Activated B cell treated with CpG ODN at 0.5 μM for 24 hours (primary cell): ENCODE measurements at regions of chr18 and their contacts with region 1.

Region 1: DNA sequence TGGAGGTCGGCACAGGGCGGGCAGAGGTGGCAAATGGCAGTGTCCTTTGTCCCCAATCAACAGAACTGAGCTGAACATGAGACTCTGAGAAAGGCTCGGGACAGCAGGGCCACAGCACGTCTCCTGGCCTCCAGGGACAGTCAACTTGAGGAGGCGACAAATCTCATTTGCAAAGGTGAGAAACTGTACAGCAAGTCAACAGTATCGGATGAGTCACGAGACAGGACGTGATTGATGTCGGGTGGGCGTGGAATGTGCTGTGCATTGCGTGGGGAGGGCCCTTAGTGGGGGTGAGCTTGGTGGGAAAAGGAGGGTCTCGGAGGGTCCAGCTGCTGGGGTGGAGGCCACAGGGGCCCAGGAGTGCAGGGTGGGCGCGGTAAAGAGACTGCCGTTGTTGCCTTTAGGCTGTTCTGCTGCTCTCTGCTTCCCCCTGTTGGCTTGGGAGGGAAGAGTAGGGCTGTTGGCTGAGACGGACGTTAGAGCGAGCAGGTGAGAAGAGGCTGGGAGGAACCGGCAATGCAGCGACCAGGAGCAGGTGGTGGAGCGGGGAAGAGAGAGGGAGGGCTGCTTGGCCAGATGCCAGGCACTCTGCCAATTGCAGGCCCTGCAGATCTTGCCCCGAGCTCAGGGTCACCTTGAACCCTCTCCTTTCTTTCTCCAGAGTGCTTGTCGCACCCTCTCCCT is 164.3 kb downstream of the BCL2 start:
- DNase-seq: peak; percentile 73
- ATAC-seq: peak; percentile 63
- H3K4me3 Mint-ChIP-seq: peak overlapping the region; percentile 84
- H3K27ac Mint-ChIP-seq: peak overlapping the region; percentile 99
- H3K4me1 Mint-ChIP-seq: peaks cover 99% of the 10 kb centered on the region
- H3K27me3 Mint-ChIP-seq: no peaks in the 10 kb centered on the region
- CTCF ChIP-seq: peak; percentile 76

Region 2: DNA sequence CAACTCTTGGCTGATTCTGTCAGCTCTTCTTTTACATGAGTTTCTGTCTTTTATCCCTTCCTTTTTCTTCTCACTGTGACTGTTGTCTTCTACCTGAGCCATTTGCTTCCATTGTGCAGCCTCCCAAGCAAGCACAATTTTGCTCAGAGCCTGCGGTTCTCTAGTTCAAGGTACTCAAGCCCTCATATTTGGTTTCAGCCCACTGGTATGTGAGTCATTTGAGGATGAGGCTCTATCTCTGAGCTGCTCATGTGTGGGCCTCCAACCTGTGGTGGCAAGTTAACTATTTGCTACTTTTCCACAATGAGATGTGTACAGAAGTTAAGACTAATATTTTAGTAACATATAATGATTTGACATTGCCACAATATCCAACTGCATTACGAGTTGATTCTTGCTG is 257.0 kb before region 1 on chr18:
- CTCF ChIA-PET with region 1: no interaction called
- POLR2A ChIA-PET with region 1: no interaction called
- intact Hi-C with region 1: no loop called
- DNase-seq: no peak
- ATAC-seq: no peak
- H3K4me3 Mint-ChIP-seq: no peak overlapping the region
- H3K27ac Mint-ChIP-seq: peak overlapping the region; percentile 57
- H3K4me1 Mint-ChIP-seq: peaks cover 15% of the 10 kb centered on the region
- H3K27me3 Mint-ChIP-seq: no peaks in the 10 kb centered on the region
- CTCF ChIP-seq: no peak

Region 3: DNA sequence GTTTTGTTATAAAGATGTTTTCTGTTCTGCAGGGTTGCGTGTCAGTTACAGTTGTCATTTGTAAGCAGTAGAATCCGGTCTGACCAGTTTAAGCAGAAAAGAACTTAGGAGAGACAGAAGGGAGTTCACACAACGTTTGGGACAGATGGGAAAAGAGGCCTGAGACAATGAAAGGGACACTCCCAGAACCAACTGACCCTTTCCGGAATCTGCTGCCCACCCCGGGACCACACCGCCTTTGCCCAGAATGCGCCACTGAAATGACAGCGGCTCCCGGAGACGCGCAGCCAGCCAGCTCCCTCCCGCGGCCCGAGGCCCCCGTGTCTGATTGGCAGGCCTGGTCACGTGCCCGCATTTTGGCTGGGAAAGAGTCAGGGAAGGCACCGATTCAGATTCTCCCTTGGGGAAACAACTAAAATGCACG is 80.3 kb before region 1 on chr18:
- CTCF ChIA-PET with region 1: no interaction called
- POLR2A ChIA-PET with region 1: no interaction called
- intact Hi-C with region 1: loop called (anchors 2 kb)
- DNase-seq: peak; percentile 45
- ATAC-seq: peak; percentile 58
- H3K4me3 Mint-ChIP-seq: peak overlapping the region; percentile 78
- H3K27ac Mint-ChIP-seq: peak overlapping the region; percentile 0
- H3K4me1 Mint-ChIP-seq: peaks cover 25% of the 10 kb centered on the region
- H3K27me3 Mint-ChIP-seq: no peaks in the 10 kb centered on the region
- CTCF ChIP-seq: no peak

Region 4: DNA sequence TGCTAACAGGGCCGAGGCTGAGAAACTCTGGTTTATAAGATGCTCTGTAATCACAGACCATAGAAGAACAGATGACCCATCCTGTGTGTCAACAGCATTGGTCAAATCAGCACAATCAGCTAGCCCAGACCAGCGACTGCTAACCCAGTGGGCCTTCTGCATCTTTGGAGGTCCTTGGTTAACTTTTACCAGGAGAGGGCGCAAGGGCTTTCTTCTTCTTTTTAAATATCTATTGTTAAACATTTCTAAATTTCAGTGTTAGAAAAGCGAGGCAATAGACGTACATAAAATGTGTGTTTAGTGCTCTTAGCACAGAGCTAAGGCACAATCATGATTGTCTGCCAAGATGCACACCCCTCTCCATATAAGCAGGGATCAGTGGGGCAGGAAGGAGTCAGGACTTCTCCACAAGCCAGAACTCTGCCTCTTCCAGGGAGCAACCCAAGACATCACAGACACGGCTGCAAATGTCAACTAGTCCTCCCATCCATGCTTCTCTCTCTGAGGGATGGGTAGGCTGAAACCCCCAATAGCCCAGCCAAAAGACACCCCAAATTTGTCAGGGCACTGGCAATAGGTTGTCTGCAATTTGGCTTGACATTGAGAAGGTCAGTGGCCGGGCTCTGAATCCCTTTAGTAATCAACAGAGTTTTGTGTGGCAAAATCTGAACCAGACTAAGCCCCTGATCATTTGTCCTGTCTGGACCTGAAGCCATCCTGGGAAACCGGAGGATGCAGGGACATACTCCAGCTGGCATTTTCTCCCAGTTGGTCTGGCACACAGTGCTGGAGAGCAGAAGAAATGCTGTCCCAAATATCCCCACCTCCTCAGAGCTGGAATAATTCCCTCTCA is 24.0 kb before region 1 on chr18:
- CTCF ChIA-PET with region 1: interaction called, 28 read pairs
- POLR2A ChIA-PET with region 1: interaction called, 6 read pairs
- intact Hi-C with region 1: loop called (anchors 1 kb)
- DNase-seq: no peak
- ATAC-seq: peak; percentile 65
- H3K4me3 Mint-ChIP-seq: no peak overlapping the region
- H3K27ac Mint-ChIP-seq: peak overlapping the region; percentile 70
- H3K4me1 Mint-ChIP-seq: peaks cover 35% of the 10 kb centered on the region
- H3K27me3 Mint-ChIP-seq: no peaks in the 10 kb centered on the region
- CTCF ChIP-seq: no peak

Region 5: GRCh38 chr18:63180971-63181376 is 25.7 kb after region 1 on chr18:
- CTCF ChIA-PET with region 1: no interaction called
- POLR2A ChIA-PET with region 1: interaction called, 52 read pairs
- intact Hi-C with region 1: no loop called
- DNase-seq: no peak
- ATAC-seq: peak; percentile 5
- H3K4me3 Mint-ChIP-seq: peak overlapping the region; percentile 72
- H3K27ac Mint-ChIP-seq: peak overlapping the region; percentile 82
- H3K4me1 Mint-ChIP-seq: peaks cover 94% of the 10 kb centered on the region
- H3K27me3 Mint-ChIP-seq: no peaks in the 10 kb centered on the region
- CTCF ChIP-seq: no peak

Region 6: DNA sequence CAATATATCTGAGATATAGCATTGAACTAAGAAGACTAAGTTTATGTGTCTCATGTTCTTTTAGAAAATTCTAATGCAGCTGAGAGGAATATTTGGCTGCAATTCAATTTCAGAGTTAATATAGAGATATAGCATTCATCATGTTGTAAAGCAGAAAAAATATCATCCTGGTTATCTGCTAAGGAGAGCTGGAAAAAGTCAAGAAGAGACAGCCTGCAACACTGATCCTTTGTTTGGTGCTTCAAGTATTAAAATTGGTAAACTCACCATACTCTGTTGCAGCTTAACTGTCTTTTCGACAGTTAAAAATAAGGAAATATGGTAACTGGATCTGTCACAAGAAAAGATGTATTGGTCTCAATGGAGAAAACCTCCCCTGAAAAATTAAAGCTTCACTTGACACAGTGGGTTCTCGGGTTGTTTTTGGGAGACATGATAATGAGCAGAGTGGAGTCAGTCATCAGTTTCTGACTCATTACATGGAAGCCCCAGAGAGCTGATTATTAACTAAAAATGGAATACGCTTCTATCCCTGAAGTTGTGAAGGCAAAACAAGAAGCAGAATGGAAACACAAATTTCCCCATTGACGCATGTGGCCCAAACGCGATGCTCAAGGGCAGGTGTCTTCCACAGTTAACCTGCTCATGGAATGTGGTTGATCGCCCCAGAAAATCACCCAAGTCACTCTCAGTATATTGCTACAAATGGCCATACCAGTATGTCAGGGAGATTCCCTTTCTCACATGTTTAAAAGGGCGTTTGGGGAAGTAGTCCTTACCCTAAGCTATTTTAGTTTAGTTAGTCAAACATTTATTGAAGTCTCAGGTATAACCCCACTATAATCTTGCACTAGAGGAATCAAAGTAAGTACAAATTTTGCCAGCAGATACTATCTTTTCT is 156.1 kb after region 1 on chr18:
- CTCF ChIA-PET with region 1: interaction called, 9 read pairs
- POLR2A ChIA-PET with region 1: interaction called, 123 read pairs
- intact Hi-C with region 1: no loop called
- DNase-seq: peak; percentile 46
- ATAC-seq: peak; percentile 73
- H3K4me3 Mint-ChIP-seq: peak overlapping the region; percentile 77
- H3K27ac Mint-ChIP-seq: peak overlapping the region; percentile 96
- H3K4me1 Mint-ChIP-seq: peaks cover 94% of the 10 kb centered on the region
- H3K27me3 Mint-ChIP-seq: no peaks in the 10 kb centered on the region
- CTCF ChIP-seq: no peak